Naive thymus-derived CD4-positive, alpha-beta T cell (primary cell): ENCODE measurements at regions of chr22 and their contacts with region 1.

Region 1: DNA sequence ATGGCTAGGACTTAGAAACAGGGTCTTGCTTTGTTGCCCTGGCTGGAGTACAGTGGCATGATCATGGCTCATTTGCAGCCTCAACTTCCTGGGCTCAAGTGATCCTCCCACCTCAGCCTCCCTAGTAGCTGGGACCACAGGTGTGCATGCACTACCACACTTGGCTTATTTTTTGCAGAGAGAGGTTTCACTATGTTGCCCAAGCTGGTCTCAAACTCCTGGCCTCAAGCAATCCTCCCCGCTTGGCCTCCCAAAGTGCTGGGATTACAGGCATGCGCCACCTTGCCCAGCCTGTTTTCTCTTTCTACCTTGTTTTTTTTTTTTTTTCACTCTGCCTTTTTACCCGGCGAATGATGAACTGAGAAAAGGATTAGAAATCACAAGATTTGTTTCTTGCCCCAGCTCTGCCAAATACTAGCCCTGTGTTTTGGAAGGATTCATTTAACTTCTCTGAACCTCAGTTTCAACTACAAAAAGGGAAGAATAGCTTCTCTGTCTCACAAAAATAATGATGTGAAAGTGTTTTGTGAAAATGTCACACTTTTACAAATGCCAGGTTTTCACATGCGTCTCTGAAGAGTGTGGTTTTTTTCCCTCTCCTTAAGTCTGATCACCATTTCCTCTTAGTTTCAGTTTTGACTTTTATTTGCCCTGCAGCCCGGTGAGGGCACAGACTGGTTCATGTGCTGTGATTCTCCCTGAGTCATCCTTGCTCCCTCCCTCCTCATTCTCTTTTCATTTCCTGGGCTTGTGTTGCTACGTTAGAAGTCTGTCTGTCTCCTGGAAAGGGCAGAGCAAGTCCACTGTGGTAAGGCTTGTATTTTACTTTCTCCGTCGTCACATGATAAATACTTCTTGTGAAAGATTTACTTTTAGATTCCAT is 67.7 kb downstream of the BCL2L13 start:
- DNase-seq: peak in 6 of 9 donors; percentile 6 to 37 (median 12)
- ATAC-seq: peak; percentile 89
- H3K4me3 ChIP-seq: no peak overlapping the region
- H3K4me3 Mint-ChIP-seq: peak overlapping the region; percentile 2 to 84 (median 75)
- H3K27ac ChIP-seq: peak overlapping the region; percentile 15
- H3K27ac Mint-ChIP-seq: peak overlapping the region; percentile 46 to 89 (median 77)
- H3K4me1 ChIP-seq: peaks cover 0 to 4% of the 10 kb centered on the region in 2 donors
- H3K4me1 Mint-ChIP-seq: peaks cover 0 to 19% (median 16%) of the 10 kb centered on the region in 7 donors
- H3K27me3 ChIP-seq: no peaks in the 10 kb centered on the region
- H3K27me3 Mint-ChIP-seq: no peaks in the 10 kb centered on the region

Region 2: GRCh38 chr22:17638432-17639246 is 67.6 kb before region 1 on chr22 and contains the start of gene BCL2L13:
- CTCF ChIA-PET with region 1: no interaction called
- POLR2A ChIA-PET with region 1: no interaction called
- intact Hi-C with region 1: loop called in 1 of 2 experiments (anchors 2 kb)
- DNase-seq: peak; percentile 77 to 91 (median 88)
- ATAC-seq: peak; percentile 96
- H3K4me3 ChIP-seq: peak within 1 kb of the TSS; percentile 73
- H3K4me3 Mint-ChIP-seq: peak within 1 kb of the TSS; percentile 87 to 95 (median 90)
- H3K27ac ChIP-seq: peak within 1 kb of the TSS; percentile 99
- H3K27ac Mint-ChIP-seq: peak within 1 kb of the TSS; percentile 92 to 99 (median 96)
- H3K4me1 ChIP-seq: peaks cover 12 to 18% of the 10 kb centered on the region in 2 donors
- H3K4me1 Mint-ChIP-seq: peaks cover 17 to 38% (median 34%) of the 10 kb centered on the region in 7 donors
- H3K27me3 ChIP-seq: no peaks in the 10 kb centered on the region
- H3K27me3 Mint-ChIP-seq: no peaks in the 10 kb centered on the region
- total RNA-seq, gene BCL2L13: 21.9 to 39.1 (median 32.8) TPM